Activated B cell treated with CpG ODN at 0.5 μM for 24 hours (primary cell): ENCODE measurements at regions of chr9 and their contacts with region 1.

Region 1: DNA sequence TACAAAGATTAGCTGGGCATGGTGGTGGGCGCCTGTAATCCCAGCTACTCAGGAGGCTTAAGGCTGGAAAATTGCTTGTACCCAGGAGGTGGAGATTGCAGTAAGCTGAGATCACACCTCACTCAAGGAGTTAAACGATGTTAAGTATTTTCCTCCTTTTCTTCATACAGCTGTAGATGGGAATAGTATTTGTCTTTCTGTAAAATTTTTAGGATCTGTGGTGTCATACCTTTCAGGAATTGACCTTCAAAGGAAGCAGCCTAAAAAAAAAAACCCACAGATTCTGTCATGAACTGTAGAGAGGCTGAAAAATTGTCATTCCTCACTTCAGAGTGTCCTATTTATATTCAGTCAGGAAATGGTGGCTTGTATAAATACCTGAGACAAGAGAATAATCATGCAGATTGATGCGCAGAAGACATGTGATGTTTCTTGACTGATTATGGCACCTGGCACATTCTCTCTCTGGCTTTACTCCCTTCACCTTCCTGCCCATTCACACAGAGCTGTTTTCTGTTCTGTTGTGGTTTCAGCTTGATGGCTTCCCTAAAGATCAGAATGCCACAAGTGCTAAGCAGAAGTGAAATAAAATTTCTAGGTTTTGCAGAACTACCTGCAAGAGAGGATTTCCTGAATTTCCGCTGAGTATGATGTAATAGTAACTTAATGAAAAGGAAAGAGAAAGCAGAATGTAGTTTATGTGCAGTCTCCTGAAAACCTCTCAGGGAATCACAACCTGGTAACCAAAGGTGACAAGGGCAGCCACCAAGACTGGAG is 3.8 kb downstream of the IFNA1 start:
- DNase-seq: no peak
- ATAC-seq: peak; percentile 95
- H3K4me3 Mint-ChIP-seq: no peak overlapping the region
- H3K27ac Mint-ChIP-seq: peak overlapping the region; percentile 30
- H3K4me1 Mint-ChIP-seq: peaks cover 12% of the 10 kb centered on the region
- H3K27me3 Mint-ChIP-seq: peaks cover 23% of the 10 kb centered on the region
- CTCF ChIP-seq: no peak

Region 2: DNA sequence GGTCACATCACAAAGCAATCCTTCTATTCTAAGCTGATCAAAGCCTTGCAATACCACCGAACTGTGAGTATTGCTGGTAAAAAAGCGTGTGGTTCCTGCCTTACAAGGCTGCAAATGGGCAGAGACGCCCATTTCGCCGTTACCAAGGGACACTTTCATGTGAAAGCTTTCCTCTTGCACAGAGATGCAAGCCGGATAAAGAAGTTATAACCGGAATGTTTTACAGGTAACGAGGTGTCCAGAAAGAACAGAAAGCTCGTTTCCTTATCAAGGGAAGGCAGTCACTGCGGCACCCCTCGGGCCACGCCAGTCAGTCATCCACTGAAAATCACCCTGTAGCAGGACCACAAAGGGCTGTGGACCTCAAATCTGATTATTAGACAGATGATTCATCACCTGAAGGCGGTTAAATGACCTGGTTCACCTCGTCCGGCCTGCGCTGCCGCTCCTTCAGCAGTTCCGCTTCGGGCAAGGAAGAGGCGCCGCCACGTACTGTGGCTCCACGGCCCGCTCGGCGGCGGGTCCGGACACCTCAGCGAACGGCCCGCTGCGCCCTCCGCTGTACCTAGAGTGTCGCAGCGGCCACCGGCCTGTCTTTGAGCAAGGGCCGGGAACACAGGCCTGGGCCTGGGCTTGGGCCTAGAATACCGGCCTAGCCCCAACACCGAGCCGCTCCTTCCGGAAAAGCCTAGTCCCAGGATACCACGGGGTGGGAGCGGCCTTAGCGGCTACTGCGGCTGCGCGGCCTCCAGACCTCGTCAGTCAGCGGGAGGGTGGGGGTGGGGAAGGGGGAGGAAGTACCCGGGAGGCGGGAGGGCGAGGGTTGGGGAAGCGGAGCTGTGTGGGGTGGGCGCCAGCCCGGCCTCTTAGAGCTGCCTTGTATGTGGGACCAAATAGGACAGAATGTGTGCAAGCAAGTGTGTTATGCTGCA is 109.1 kb before region 1 on chr9 and contains the start of gene KLHL9:
- CTCF ChIA-PET with region 1: no interaction called
- POLR2A ChIA-PET with region 1: interaction called, 9 read pairs
- intact Hi-C with region 1: loop called (anchors 1 kb)
- DNase-seq: peak; percentile 76
- ATAC-seq: peak; percentile 88
- H3K4me3 Mint-ChIP-seq: peak within 1 kb of the TSS; percentile 91
- H3K27ac Mint-ChIP-seq: peak within 1 kb of the TSS; percentile 87
- H3K4me1 Mint-ChIP-seq: peaks cover 50% of the 10 kb centered on the region
- H3K27me3 Mint-ChIP-seq: peaks cover 7% of the 10 kb centered on the region
- CTCF ChIP-seq: no peak
- total RNA-seq, gene KLHL9: 13.1 and 13.8 TPM in 2 replicates

Region 3: DNA sequence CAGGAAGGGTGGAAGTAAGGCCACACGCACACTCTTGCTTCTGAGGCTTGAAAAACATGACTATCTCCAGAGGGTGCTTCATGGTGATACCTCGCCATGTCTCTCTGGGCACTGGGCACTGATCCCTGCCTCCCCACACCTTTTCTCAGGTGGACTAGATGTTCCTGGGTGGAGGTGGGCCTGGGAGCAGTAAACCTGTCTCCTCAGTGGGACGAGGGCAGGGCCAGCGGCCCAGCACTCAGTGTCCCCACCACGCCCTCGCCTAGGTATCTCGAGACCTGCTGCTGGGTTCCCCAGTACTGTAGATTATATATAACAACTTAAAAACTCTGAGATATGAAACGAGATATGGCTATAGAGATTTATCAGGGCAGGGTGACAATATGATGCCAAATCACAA is 81.8 kb before region 1 on chr9:
- CTCF ChIA-PET with region 1: no interaction called
- POLR2A ChIA-PET with region 1: no interaction called
- intact Hi-C with region 1: loop called (anchors 1 kb)
- DNase-seq: no peak
- ATAC-seq: no peak
- H3K4me3 Mint-ChIP-seq: no peak overlapping the region
- H3K27ac Mint-ChIP-seq: no peak overlapping the region
- H3K4me1 Mint-ChIP-seq: peaks cover 13% of the 10 kb centered on the region
- H3K27me3 Mint-ChIP-seq: peaks cover 23% of the 10 kb centered on the region
- CTCF ChIP-seq: no peak